ENCODE measurements at regions of chr14 and their contacts with region 1.

Region 1: GRCh38 chr14:65164068-65164824 is 61.9 kb upstream of the MAX start:
- DNase-seq: peak in 4 of 7 donors; percentile 16 to 41 (median 34)
- H3K4me3 ChIP-seq: no peak overlapping the region
- H3K27ac ChIP-seq: no peak overlapping the region
- H3K4me1 ChIP-seq: no peaks in the 10 kb centered on the region
- H3K27me3 ChIP-seq: no peaks in the 10 kb centered on the region
- CTCF ChIP-seq: peak; percentile 44 to 77 (median 67)
- POLR2A ChIP-seq: no peak

Region 2: GRCh38 chr14:65222440-65222858 is 58.2 kb after region 1 on chr14:
- intact Hi-C with region 1: no loop called
- DNase-seq: peak; percentile 27 to 75 (median 50)
- H3K4me3 ChIP-seq: no peak overlapping the region
- H3K27ac ChIP-seq: no peak overlapping the region
- H3K4me1 ChIP-seq: no peaks in the 10 kb centered on the region
- H3K27me3 ChIP-seq: no peaks in the 10 kb centered on the region
- CTCF ChIP-seq: peak; percentile 51 to 75 (median 68)
- POLR2A ChIP-seq: no peak

Region 3: DNA sequence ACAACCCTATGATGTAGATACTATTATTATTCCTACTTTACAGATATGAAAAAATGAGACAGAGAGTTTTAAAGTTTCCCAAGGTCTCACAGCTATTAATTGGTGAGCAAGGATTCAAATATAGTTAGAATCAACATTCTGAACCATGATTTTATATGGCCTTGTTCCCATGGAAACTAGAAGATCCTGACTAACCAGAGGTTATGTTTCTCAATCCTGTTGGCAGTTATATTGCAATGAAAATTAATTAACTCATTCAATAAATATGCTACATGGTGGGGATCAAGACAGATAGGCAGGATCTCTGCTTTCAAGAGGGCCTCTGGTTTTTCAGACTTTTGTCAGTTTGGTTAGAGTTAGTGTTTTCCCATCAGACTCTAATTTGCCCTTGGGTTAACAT is 239.0 kb after region 1 on chr14:
- intact Hi-C with region 1: loop called in 1 of 2 experiments (anchors 10 kb)
- DNase-seq: no peak
- H3K4me3 ChIP-seq: no peak overlapping the region
- H3K27ac ChIP-seq: no peak overlapping the region
- H3K4me1 ChIP-seq: peaks cover 0 to 8% of the 10 kb centered on the region in 2 donors
- H3K27me3 ChIP-seq: no peaks in the 10 kb centered on the region
- CTCF ChIP-seq: no peak
- POLR2A ChIP-seq: no peak

Region 4: DNA sequence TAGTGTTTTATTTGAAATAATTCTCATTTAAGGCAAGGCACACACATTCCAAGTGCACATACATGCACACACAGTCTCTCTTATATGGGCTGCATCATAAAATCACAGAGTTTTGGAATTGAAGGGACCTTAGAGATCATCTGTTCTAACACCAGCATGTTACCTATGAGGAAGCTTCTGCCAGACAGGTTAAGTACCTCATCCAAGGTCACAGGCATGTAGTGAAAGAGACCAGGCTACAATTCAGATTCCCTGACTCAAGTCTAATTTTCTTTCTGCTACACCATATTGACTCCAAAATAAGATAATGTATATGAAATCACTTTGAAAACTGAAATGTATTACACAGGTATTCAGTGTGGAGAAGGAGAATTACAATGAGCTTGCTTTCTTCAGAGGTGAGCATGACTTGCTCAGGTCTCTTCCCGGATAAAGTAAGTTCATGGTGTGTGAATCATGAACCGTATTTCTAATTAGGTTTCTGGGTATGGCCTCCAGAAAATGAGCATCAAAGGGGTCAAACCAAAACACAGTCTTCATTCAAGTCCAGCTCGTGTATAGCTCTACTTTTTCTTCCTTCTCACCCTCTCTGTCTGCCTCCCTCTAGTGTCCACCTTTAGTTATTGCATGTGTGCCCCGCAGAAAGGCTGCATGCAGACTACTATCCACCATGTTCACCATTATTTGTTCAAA is 660.2 kb after region 1 on chr14:
- intact Hi-C with region 1: loop called (anchors 5 to 10 kb)
- DNase-seq: peak; percentile 47 to 74 (median 58)
- H3K4me3 ChIP-seq: no peak overlapping the region
- H3K27ac ChIP-seq: no peak overlapping the region
- H3K4me1 ChIP-seq: no peaks in the 10 kb centered on the region
- H3K27me3 ChIP-seq: no peaks in the 10 kb centered on the region
- CTCF ChIP-seq: peak; percentile 80 to 95 (median 90)
- POLR2A ChIP-seq: no peak

Region 5: GRCh38 chr14:65958664-65959562 is 794.7 kb after region 1 on chr14:
- intact Hi-C with region 1: loop called in 1 of 2 experiments (anchors 5 kb)
- DNase-seq: peak in 2 of 7 donors; percentile 2 to 10
- H3K4me3 ChIP-seq: no peak overlapping the region
- H3K27ac ChIP-seq: no peak overlapping the region
- H3K4me1 ChIP-seq: no peaks in the 10 kb centered on the region
- H3K27me3 ChIP-seq: no peaks in the 10 kb centered on the region
- CTCF ChIP-seq: peak; percentile 33 to 63 (median 46)
- POLR2A ChIP-seq: no peak

Region 6: DNA sequence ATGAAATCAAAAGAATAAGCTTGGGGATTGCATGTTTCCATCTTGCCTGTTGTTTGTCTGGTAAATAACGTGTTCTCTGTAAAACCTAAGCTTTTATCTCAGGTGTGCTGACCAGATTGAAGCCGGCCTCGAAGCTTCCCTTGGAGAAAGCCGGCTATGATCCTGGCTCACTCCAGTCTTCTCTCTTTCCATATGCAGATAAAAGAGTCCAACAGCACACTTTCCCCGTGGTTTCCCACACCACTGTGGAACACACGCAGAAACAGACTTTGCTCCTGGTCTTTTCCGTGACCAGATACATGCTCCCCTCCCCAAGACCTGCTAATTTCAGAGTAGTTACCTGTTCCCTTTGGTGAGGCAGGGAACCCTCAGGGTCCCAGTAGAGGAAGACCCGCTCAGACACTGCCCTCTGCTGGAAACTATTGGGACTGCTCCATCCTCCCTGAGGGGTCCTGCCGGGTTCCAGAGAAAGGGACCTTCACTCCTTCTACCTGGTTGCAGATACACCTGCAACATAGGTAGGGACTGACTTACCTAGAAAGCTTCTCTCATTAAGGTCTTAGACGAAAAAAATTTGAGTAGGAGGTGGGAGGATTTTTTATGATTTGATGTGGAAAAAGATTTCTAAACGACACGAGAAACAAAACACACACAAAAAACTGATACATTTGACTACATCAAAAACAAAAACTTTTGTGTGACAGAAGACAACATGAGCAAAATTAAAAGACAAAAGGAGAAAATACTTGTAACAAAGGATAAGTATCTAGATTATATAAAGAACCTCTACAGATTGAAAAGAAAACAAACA is 906.5 kb after region 1 on chr14:
- intact Hi-C with region 1: loop called in 1 of 2 experiments (anchors 10 kb)
- DNase-seq: peak in 6 of 7 donors; percentile 27 to 67 (median 42)
- H3K4me3 ChIP-seq: no peak overlapping the region
- H3K27ac ChIP-seq: no peak overlapping the region
- H3K4me1 ChIP-seq: no peaks in the 10 kb centered on the region
- H3K27me3 ChIP-seq: no peaks in the 10 kb centered on the region
- CTCF ChIP-seq: peak; percentile 45 to 72 (median 67)
- POLR2A ChIP-seq: no peak

Measured in adrenal gland (tissue), 19 donors.